ENCODE measurements at regions of chr16 and their contacts with region 1.

Region 1: GRCh38 chr16:48499923-48500381 is 110.0 kb downstream of the N4BP1 start:
- DNase-seq: peak; percentile 30 to 55 (median 34)
- ATAC-seq: peak; percentile 45
- H3K4me3 ChIP-seq: no peak overlapping the region
- H3K27ac ChIP-seq: peak overlapping the region in 2 of 4 donors; percentile 5 to 41
- H3K4me1 ChIP-seq: peaks cover 23% of the 10 kb centered on the region
- H3K27me3 ChIP-seq: no peaks in the 10 kb centered on the region
- CTCF ChIP-seq: no peak
- POLR2A ChIP-seq: no peak

Region 2: GRCh38 chr16:48426244-48427141 is 73.5 kb before region 1 on chr16:
- intact Hi-C with region 1: loop called (anchors 10 kb)
- DNase-seq: no peak
- ATAC-seq: no peak
- H3K4me3 ChIP-seq: no peak overlapping the region
- H3K27ac ChIP-seq: no peak overlapping the region
- H3K4me1 ChIP-seq: no peaks in the 10 kb centered on the region
- H3K27me3 ChIP-seq: no peaks in the 10 kb centered on the region
- CTCF ChIP-seq: no peak
- POLR2A ChIP-seq: no peak

Measured in body of pancreas (tissue), 4 donors.